Activated T-helper 1 cell treated with anti-CD3 and anti-CD28 coated beads, Interleukin-12 subunit alpha, Interleukin-12 subunit beta, Interleukin-2, Interleukin-4 antibody, amounts not matched to agents 30 ng/mL and 10 ng/mL and 1 ng/mL, durations not matched to agents 14 hours and 24 hours and 36 hours (primary cell): ENCODE measurements at regions of chr17 and their contacts with region 1.

Region 1: GRCh38 chr17:75109407-75110233 is at the start of gene ARMC7:
- DNase-seq: peak; percentile 93
- H3K4me3 Mint-ChIP-seq: peak within 1 kb of the TSS; percentile 93
- H3K27ac Mint-ChIP-seq: peak within 1 kb of the TSS; percentile 84
- H3K4me1 Mint-ChIP-seq: peaks cover 36% of the 10 kb centered on the region
- H3K27me3 Mint-ChIP-seq: no peaks in the 10 kb centered on the region
- total RNA-seq, gene ARMC7: 11.6 and 13.0 TPM in 2 replicates

Region 2: GRCh38 chr17:74950207-74950606 is 159.4 kb before region 1 on chr17:
- intact Hi-C with region 1: no loop called
- DNase-seq: no peak
- H3K4me3 Mint-ChIP-seq: no peak overlapping the region
- H3K27ac Mint-ChIP-seq: no peak overlapping the region
- H3K4me1 Mint-ChIP-seq: no peaks in the 10 kb centered on the region
- H3K27me3 Mint-ChIP-seq: peaks cover 4% of the 10 kb centered on the region

Region 3: GRCh38 chr17:74961657-74962490 is 147.7 kb before region 1 on chr17:
- intact Hi-C with region 1: loop called (anchors 5 kb)
- DNase-seq: peak; percentile 70
- H3K4me3 Mint-ChIP-seq: no peak overlapping the region
- H3K27ac Mint-ChIP-seq: no peak overlapping the region
- H3K4me1 Mint-ChIP-seq: no peaks in the 10 kb centered on the region
- H3K27me3 Mint-ChIP-seq: peaks cover 6% of the 10 kb centered on the region

Region 4: GRCh38 chr17:75024686-75025397 is 84.8 kb before region 1 on chr17:
- intact Hi-C with region 1: no loop called
- DNase-seq: no peak
- H3K4me3 Mint-ChIP-seq: peak overlapping the region; percentile 41
- H3K27ac Mint-ChIP-seq: no peak overlapping the region
- H3K4me1 Mint-ChIP-seq: no peaks in the 10 kb centered on the region
- H3K27me3 Mint-ChIP-seq: no peaks in the 10 kb centered on the region

Region 5: GRCh38 chr17:75069783-75070182 is 39.8 kb before region 1 on chr17:
- intact Hi-C with region 1: loop called (anchors 5 kb)
- DNase-seq: no peak
- H3K4me3 Mint-ChIP-seq: no peak overlapping the region
- H3K27ac Mint-ChIP-seq: no peak overlapping the region
- H3K4me1 Mint-ChIP-seq: peaks cover 26% of the 10 kb centered on the region
- H3K27me3 Mint-ChIP-seq: no peaks in the 10 kb centered on the region

Region 6: GRCh38 chr17:75131280-75132017 is 21.8 kb after region 1 on chr17 and contains the start of gene NT5C:
- intact Hi-C with region 1: loop called (anchors 1 kb)
- DNase-seq: peak; percentile 70
- H3K4me3 Mint-ChIP-seq: peak within 1 kb of the TSS; percentile 92
- H3K27ac Mint-ChIP-seq: peak within 1 kb of the TSS; percentile 88
- H3K4me1 Mint-ChIP-seq: peaks cover 12% of the 10 kb centered on the region
- H3K27me3 Mint-ChIP-seq: no peaks in the 10 kb centered on the region
- total RNA-seq, gene NT5C: 80.0 and 80.1 TPM in 2 replicates

Region 7: DNA sequence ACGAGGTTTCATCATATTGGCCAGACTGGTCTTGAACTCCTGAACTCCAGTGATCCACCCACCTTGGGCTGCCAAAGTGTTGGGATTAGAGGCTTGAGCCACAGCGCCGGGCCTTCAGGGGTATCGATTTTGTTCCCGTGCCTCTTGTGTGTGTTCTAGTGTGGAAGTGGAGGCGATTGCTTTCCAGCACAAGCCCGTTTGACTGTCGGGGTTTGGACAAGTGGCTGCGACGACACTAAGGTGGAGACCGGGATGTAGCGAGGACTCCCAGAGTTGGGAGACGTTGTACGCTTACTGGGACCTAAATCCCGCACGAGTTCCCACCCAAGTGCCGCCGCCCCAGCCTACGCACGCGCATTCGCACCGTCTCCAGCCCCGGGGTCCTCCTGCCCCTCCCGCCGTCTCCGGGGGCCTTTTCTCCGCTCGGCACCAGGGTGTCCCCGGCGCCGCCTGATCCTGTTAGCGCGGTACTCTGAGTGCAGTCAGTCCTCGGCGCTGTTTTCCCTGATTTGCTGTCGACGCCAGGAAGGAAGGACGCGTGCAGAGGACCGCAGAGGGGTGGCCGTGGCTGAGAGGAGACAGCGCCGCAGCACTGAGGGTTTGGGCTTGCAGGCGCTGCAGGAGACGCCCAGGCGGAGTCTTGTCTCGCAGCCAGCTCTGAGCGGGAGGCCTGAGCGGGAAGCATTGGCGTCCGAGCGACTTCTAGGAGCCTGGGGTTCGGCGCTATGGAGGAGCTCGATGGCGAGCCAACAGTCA is 95.6 kb after region 1 on chr17 and contains the start of gene NUP85:
- intact Hi-C with region 1: loop called (anchors 1 kb)
- DNase-seq: peak; percentile 89
- H3K4me3 Mint-ChIP-seq: peak within 1 kb of the TSS; percentile 98
- H3K27ac Mint-ChIP-seq: peak within 1 kb of the TSS; percentile 99
- H3K4me1 Mint-ChIP-seq: peaks cover 23% of the 10 kb centered on the region
- H3K27me3 Mint-ChIP-seq: no peaks in the 10 kb centered on the region
- total RNA-seq, gene NUP85: 122 and 129 TPM in 2 replicates

Region 8: GRCh38 chr17:75412455-75413317 is 303.1 kb after region 1 on chr17:
- intact Hi-C with region 1: loop called (anchors 2 kb)
- DNase-seq: peak; percentile 69
- H3K4me3 Mint-ChIP-seq: no peak overlapping the region
- H3K27ac Mint-ChIP-seq: no peak overlapping the region
- H3K4me1 Mint-ChIP-seq: peaks cover 29% of the 10 kb centered on the region
- H3K27me3 Mint-ChIP-seq: peaks cover 10% of the 10 kb centered on the region